A549 (cell line): ENCODE measurements at regions of chr2 and their contacts with region 1.

Region 1: DNA sequence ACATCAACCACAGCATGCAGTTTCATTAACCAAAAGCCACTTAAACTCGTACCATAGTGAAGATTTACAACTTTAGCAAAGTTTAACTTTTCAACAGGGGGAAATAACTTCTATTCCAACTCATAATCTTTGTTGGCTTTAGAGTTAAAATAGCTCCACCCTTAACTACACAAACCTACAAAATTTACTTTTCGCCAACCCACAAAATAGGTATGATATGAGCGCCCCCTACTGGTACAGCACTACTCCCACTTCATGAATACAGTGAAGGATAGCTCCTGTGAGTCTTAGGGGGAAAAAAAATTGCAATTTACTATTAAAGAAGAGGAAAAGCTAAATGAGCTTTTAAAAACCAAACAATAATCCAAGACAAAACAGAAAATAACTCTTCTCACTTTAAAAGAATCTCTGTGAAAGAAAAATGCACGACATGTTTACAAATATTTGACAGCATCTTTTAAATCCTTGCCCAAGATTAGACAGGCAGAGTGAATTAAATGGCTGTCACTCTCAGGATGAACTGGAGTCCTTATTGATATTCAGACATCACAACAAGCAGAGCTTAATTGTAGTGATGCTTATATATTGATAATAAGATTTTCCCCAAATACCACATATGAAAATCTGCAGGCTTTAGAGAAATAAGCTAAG is 32.2 kb downstream of the TMEFF2 start:
- DNase-seq: peak; percentile 4 to 64
- ATAC-seq: peak; percentile 87 to 93; a peak in 5 of 6 replicates
- H3K4me3 ChIP-seq: no peak overlapping the region
- H3K27ac ChIP-seq: peak overlapping the region; percentile 1 to 21; a peak in 2 of 6 replicates
- H3K4me1 ChIP-seq: peaks cover 5% of the 10 kb centered on the region; the same call in 1 of the 3 replicates
- CTCF ChIP-seq: peak; percentile 97
- EP300 ChIP-seq: no peak
- POLR2A ChIP-seq: no peak
- RAD21 ChIP-seq: peak; percentile 97

Region 2: DNA sequence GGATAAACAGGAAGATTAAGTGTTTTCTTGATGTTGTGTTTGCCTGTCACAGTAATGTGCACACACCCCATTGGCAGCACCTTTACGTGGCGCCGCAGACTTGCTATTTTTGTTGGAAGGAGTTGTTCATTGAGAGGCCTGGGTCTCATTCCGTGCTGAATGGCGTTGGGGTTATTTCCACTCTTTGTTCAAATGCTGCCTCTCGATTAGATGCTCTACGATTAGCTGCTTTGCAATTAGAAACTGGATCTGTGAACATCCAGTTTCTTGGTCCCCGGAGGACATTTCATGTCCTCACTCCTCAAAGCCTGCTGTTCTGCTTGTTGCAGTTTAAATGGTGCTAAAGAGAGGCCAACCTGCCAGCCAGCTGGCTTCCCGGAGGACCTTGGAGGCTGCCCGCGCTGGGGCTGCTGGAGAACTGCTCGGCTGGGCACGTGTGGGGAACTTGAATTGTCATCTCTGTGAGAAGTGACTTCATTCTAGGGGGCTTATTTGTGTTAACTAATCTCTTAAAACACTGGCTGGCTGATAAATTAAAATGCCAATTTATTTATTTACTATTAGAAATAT is 602.0 kb before region 1 on chr2:
- CTCF ChIA-PET with region 1: interaction called, 49 read pairs
- POLR2A ChIA-PET with region 1: no interaction called
- DNase-seq: no peak
- ATAC-seq: no peak
- H3K4me3 ChIP-seq: no peak overlapping the region
- H3K27ac ChIP-seq: no peak overlapping the region
- H3K4me1 ChIP-seq: 0 out of 3 replicates have a peak, but pooled peaks cover under 1% of the 10 kb centered on the region
- CTCF ChIP-seq: no peak
- EP300 ChIP-seq: no peak
- POLR2A ChIP-seq: no peak
- RAD21 ChIP-seq: no peak

Region 3: DNA sequence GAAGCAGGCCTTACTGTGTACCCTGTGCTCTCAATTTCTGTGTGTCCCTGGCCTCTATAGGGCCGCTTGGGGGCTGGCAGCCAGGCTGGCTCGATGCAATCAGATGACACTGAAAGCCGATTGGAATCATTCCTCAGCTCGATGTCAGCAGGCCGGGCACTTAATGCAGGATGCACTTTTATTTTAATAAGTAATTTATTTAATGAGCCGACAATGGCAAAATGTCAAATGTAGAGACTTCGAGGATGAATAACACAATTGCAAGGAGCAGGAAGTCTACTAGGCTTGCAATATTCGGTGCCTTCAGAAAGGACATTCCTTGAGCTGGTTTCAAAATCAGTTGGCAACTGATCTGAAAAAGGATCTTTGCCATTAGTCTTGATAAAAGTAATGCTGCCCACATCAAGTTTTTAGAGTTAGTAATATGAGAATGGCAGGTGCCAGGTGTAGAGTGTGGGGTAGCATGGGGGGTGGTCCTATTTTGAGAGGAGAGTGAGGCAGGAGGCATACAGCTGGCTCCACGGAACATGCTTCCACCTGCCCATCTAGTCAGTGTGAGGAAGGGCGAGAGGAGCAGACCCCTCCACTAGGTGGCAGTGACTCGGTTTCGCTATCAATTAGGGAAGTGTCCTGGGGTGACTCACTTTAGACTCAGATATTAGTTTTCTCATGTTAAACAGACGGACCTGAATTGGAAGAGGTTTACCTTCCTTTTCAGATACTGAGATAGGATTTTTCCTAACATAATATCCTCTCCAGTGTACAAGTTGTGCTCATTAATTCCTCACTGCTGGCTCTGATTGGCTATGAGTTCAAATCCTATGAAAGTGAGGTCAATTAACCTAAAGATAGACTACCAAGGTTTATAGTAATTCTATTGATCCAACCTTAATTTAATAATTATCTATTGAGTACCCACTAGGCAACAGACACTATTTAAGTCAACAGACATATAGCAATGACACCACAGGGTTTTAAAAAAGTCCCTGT is 403.7 kb before region 1 on chr2:
- CTCF ChIA-PET with region 1: interaction called, 10 read pairs
- POLR2A ChIA-PET with region 1: no interaction called
- DNase-seq: peak; percentile 77 to 87
- ATAC-seq: peak; percentile 100
- H3K4me3 ChIP-seq: peak overlapping the region; percentile 29
- H3K27ac ChIP-seq: peak overlapping the region; percentile 47 to 83
- H3K4me1 ChIP-seq: peaks cover 5% of the 10 kb centered on the region; the same call in 1 of the 3 replicates
- CTCF ChIP-seq: peak; percentile 77
- EP300 ChIP-seq: no peak
- POLR2A ChIP-seq: no peak
- RAD21 ChIP-seq: peak; percentile 53 to 59; a peak in 4 of 5 replicates

Region 4: GRCh38 chr2:191811807-191812602 is 350.5 kb before region 1 on chr2:
- CTCF ChIA-PET with region 1: interaction called, 227 read pairs
- POLR2A ChIA-PET with region 1: interaction called, 7 read pairs
- DNase-seq: peak; percentile 31 to 65
- ATAC-seq: peak; percentile 95 to 98
- H3K4me3 ChIP-seq: no peak overlapping the region
- H3K27ac ChIP-seq: peak overlapping the region; percentile 48 to 58; a peak in 4 of 6 replicates
- H3K4me1 ChIP-seq: peaks cover 5% of the 10 kb centered on the region; the same call in 1 of the 3 replicates
- CTCF ChIP-seq: peak; percentile 95
- EP300 ChIP-seq: no peak
- POLR2A ChIP-seq: no peak
- RAD21 ChIP-seq: peak; percentile 99

Region 5: DNA sequence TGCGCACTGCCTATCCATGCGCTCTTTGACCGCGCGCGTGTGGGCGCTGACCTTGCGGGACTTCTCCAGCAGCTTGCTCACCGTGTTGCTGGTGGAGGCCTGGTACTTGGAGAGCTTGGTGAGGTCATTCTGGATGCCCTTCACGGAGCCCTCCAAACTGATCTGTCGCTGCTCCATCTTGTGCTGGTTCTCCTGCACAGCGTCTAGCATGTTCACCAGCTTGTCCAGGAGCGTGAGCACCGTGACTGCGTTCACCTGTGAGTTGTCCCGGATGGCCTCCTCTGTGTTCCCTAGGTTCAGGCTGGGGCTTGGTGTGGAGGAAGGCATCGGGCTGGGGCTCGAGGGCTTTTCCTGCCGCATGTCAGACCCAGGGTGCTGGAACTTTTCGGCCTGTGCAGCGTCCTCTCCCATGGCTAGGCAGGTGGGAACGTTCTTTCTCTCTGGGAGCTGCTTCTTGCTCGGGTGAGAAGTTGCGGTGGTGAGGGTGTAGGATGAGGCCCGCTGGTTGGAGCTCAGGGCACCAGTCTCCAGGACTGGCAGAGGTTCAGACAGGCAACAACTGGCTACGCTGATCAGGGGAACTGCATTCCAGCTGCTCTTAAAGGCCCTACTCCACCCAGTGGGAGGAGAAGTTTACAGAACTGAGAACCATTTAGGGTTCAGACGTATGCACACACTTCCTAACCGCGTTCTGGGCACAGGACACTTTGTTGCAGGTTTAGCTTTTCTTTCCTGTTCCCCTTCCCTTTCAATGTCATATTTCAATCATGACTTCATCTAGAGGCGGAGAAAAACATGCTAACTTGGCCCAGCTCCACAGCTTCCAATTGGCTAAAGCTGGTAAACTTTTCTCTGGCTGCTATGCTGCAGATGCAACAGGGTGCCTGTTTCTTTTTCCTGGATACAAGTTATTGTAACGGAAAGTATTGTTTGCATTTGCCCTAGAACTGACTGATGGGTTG is 315.7 kb before region 1 on chr2 and contains the start of gene CAVIN2:
- CTCF ChIA-PET with region 1: interaction called, 17 read pairs
- POLR2A ChIA-PET with region 1: no interaction called
- DNase-seq: peak; percentile 45 to 77
- ATAC-seq: peak; percentile 88 to 91
- H3K4me3 ChIP-seq: peak within 1 kb of the TSS; percentile 53
- H3K27ac ChIP-seq: peak within 1 kb of the TSS; percentile 71 to 87
- H3K4me1 ChIP-seq: peaks cover 30% of the 10 kb centered on the region
- CTCF ChIP-seq: no peak
- EP300 ChIP-seq: no peak
- POLR2A ChIP-seq: peak; percentile 35; the same call in 1 of the 2 replicates
- RAD21 ChIP-seq: 0 out of 5 replicates have a peak, but pooled peaks of 1 of the 2 experiments have one; percentile 13
- polyA plus RNA-seq, gene CAVIN2: 17.0 and 20.3 TPM in 2 replicates

Region 6: DNA sequence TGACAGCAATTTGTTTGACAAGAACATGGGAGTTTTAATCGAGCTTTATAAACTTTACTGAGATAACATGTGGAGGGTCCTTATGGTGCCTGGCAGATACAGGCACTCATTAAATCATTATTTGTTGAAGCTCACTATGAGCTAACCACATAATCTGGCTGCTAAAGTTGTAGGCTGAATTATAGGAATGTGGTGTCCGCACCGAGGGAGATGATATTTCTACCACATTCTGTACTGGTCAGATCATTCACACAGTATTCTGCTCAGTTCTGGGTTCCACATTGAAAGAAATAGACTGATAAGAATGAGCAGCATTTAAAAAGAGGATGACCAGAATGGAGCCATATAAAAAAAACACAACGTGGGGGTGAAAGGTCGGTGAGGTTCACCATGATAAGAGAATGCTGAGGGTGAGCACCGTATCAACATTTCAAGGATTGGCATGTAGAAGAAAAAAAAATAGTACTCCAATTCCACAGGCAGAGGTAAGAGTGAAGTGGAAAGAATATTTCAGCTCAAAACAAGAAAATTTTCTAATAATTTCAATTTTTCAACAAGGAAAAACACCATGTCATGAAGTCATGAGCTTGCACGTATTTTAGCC is 22.2 kb before region 1 on chr2:
- CTCF ChIA-PET with region 1: interaction called, 10 read pairs
- POLR2A ChIA-PET with region 1: no interaction called
- DNase-seq: no peak
- ATAC-seq: no peak
- H3K4me3 ChIP-seq: no peak overlapping the region
- H3K27ac ChIP-seq: no peak overlapping the region
- H3K4me1 ChIP-seq: no peaks in the 10 kb centered on the region
- CTCF ChIP-seq: no peak
- EP300 ChIP-seq: no peak
- POLR2A ChIP-seq: no peak
- RAD21 ChIP-seq: no peak

Region 7: GRCh38 chr2:192286093-192286701 is 123.7 kb after region 1 on chr2:
- CTCF ChIA-PET with region 1: no interaction called
- POLR2A ChIA-PET with region 1: no interaction called
- DNase-seq: peak in 1 of 2 experiments; percentile 53
- ATAC-seq: peak; percentile 74 to 79; a peak in 5 of 6 replicates
- H3K4me3 ChIP-seq: no peak overlapping the region
- H3K27ac ChIP-seq: no peak overlapping the region
- H3K4me1 ChIP-seq: no peaks in the 10 kb centered on the region
- CTCF ChIP-seq: peak; percentile 52
- EP300 ChIP-seq: no peak
- POLR2A ChIP-seq: no peak
- RAD21 ChIP-seq: peak; percentile 70 to 72